ENCODE measurements at regions of chr11 and their contacts with region 1.

Region 1: GRCh38 chr11:78798660-78799059 is 224.0 kb upstream of the NARS2 start:
- DNase-seq: peak; percentile 81
- ATAC-seq: peak; percentile 36
- H3K4me3 ChIP-seq: no peak overlapping the region
- H3K27ac ChIP-seq: peak overlapping the region; percentile 87
- H3K4me1 ChIP-seq: peaks cover 48% of the 10 kb centered on the region
- H3K27me3 ChIP-seq: no peaks in the 10 kb centered on the region
- CTCF ChIP-seq: peak; percentile 75
- POLR2A ChIP-seq: no peak
- RAD21 ChIP-seq: peak; percentile 69

Region 2: DNA sequence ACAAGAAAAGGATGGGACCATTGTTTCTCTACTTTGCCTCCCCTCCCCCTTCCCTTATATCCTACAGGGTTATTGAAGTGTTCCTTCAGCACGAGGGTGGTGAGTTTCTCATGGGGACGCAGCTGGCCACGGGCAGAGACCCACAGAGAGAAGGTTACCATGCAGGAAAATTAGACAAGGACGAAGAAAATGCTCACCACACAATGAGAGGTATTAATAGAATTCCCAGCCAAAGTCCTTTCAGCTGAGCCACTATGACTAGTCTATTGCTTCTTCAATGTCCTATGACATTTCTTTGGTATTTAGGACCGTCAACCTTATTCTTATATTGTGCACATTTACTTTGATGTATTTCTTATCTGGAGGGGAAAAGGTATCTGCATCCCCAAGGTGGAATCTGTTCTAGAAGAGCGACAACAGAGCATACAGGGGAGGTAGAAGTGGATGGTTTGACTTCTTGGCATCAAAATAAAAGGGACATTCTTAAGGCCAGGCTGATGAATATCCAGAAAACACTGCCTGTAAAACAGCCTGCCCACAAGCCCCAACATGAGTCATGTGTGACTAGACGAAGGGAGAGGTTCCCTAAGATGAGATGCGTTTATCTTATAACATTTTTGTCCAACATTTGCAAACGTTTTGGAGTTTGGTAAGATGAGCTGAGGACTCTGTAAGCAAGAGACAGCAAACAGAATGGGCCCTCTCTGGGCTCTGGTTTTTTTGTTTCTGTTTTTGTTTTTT is 14.2 kb before region 1 on chr11:
- CTCF ChIA-PET with region 1: interaction called, 16 read pairs
- POLR2A ChIA-PET with region 1: interaction called, 5 read pairs
- dilution Hi-C with region 1: no loop called
- in situ Hi-C with region 1: no loop called
- intact Hi-C with region 1: no loop called
- DNase-seq: peak; percentile 95
- ATAC-seq: peak; percentile 84
- H3K4me3 ChIP-seq: no peak overlapping the region
- H3K27ac ChIP-seq: peak overlapping the region; percentile 93
- H3K4me1 ChIP-seq: peaks cover 29% of the 10 kb centered on the region
- H3K27me3 ChIP-seq: no peaks in the 10 kb centered on the region
- CTCF ChIP-seq: no peak
- POLR2A ChIP-seq: no peak
- RAD21 ChIP-seq: no peak

Region 3: GRCh38 chr11:78821371-78822306 is 23.0 kb after region 1 on chr11:
- CTCF ChIA-PET with region 1: interaction called, 7 read pairs
- POLR2A ChIA-PET with region 1: interaction called, 3 read pairs
- dilution Hi-C with region 1: no loop called
- in situ Hi-C with region 1: no loop called
- intact Hi-C with region 1: loop called (anchors 1 kb)
- DNase-seq: peak; percentile 88
- ATAC-seq: peak; percentile 72
- H3K4me3 ChIP-seq: no peak overlapping the region
- H3K27ac ChIP-seq: no peak overlapping the region; the same call in 1 of the 2 replicates
- H3K4me1 ChIP-seq: peaks cover 10% of the 10 kb centered on the region
- H3K27me3 ChIP-seq: no peaks in the 10 kb centered on the region
- CTCF ChIP-seq: no peak
- POLR2A ChIP-seq: no peak
- RAD21 ChIP-seq: no peak

Region 4: GRCh38 chr11:78961247-78961646 is 162.6 kb after region 1 on chr11:
- CTCF ChIA-PET with region 1: interaction called, 3 read pairs
- POLR2A ChIA-PET with region 1: no interaction called
- dilution Hi-C with region 1: no loop called
- in situ Hi-C with region 1: no loop called
- intact Hi-C with region 1: loop called (anchors 1 kb)
- DNase-seq: peak; percentile 46
- ATAC-seq: peak; percentile 37; the same call in 1 of the 2 replicates
- H3K4me3 ChIP-seq: no peak overlapping the region
- H3K27ac ChIP-seq: no peak overlapping the region
- H3K4me1 ChIP-seq: peaks cover 9% of the 10 kb centered on the region
- H3K27me3 ChIP-seq: no peaks in the 10 kb centered on the region
- CTCF ChIP-seq: peak; percentile 50
- POLR2A ChIP-seq: no peak
- RAD21 ChIP-seq: peak; percentile 70

Region 5: GRCh38 chr11:79087238-79087960 is 288.7 kb after region 1 on chr11:
- CTCF ChIA-PET with region 1: interaction called, 5 read pairs
- POLR2A ChIA-PET with region 1: no interaction called
- dilution Hi-C with region 1: no loop called
- in situ Hi-C with region 1: no loop called
- intact Hi-C with region 1: loop called (anchors 10 kb)
- DNase-seq: peak; percentile 62
- ATAC-seq: peak; percentile 69
- H3K4me3 ChIP-seq: no peak overlapping the region
- H3K27ac ChIP-seq: peak overlapping the region; percentile 62; the same call in 1 of the 2 replicates
- H3K4me1 ChIP-seq: peaks cover 22% of the 10 kb centered on the region
- H3K27me3 ChIP-seq: no peaks in the 10 kb centered on the region
- CTCF ChIP-seq: no peak
- POLR2A ChIP-seq: no peak
- RAD21 ChIP-seq: no peak

Region 6: GRCh38 chr11:79236541-79236971 is 437.9 kb after region 1 on chr11:
- CTCF ChIA-PET with region 1: no interaction called
- POLR2A ChIA-PET with region 1: no interaction called
- dilution Hi-C with region 1: no loop called
- in situ Hi-C with region 1: loop called (anchors 10 kb)
- intact Hi-C with region 1: loop called (anchors 10 kb)
- DNase-seq: peak; percentile 99
- ATAC-seq: peak; percentile 81
- H3K4me3 ChIP-seq: no peak overlapping the region
- H3K27ac ChIP-seq: peak overlapping the region; percentile 54
- H3K4me1 ChIP-seq: peaks cover 16% of the 10 kb centered on the region
- H3K27me3 ChIP-seq: no peaks in the 10 kb centered on the region
- CTCF ChIP-seq: no peak
- POLR2A ChIP-seq: no peak; the same call in 1 of the 2 replicates
- RAD21 ChIP-seq: no peak